ENCODE measurements at regions of chr12 and their contacts with region 1.

Region 1: DNA sequence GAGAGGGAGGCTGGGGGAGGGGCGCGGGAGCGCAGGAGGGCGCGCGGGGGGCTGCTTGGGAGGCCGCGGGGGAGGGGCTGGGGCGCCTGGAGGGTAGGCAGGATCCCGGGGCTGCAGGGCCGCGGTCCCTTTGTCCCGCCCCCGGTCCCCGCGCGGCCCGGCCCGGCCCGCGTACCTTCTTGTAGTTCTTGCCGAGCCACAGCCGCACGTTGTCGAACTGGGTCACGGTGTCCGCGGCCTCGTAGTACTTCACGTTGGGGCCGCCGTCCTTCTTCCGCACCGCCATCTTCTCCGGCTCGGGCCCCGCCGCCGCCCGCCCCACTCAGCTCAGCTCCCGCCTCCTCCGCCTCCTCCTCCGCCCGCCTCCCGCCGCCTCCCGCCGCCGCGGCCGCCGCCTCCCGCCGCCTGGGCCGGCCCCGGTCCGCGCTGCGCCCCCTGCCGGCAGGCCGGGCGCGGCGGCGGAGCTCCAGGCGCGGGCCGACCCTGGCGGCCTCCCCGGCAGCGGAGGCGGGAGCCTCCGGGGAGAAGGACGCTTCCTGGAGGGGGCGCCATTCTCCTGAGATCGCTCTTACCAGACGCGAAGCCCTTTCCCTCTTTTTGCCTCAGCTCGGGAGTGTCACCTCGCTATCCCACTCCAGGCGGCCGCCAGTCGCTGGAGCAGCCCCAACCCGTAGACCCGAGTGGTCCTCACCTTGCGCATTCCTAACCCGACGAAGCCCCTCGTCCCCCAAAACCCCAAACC is at the start of gene SMARCC2:
- H3K4me3 ChIP-seq: peak within 1 kb of the TSS; percentile 87
- H3K27ac ChIP-seq: peak within 1 kb of the TSS; percentile 86
- H3K4me1 ChIP-seq: no peaks in the 10 kb centered on the region; the same call in 1 of the 2 replicates
- CTCF ChIP-seq: peak; percentile 92

Region 2: GRCh38 chr12:56104109-56104814 is 85.1 kb before region 1 on chr12 and contains the start of gene PA2G4:
- CTCF ChIA-PET with region 1: interaction called, 10 read pairs
- POLR2A ChIA-PET with region 1: interaction called, 16 read pairs
- H3K4me3 ChIP-seq: peak within 1 kb of the TSS; percentile 82
- H3K27ac ChIP-seq: peak within 1 kb of the TSS; percentile 90
- H3K4me1 ChIP-seq: 0 out of 2 replicates have a peak, but pooled peaks cover 2% of the 10 kb centered on the region
- CTCF ChIP-seq: no peak; the same call in 1 of the 2 replicates

Region 3: DNA sequence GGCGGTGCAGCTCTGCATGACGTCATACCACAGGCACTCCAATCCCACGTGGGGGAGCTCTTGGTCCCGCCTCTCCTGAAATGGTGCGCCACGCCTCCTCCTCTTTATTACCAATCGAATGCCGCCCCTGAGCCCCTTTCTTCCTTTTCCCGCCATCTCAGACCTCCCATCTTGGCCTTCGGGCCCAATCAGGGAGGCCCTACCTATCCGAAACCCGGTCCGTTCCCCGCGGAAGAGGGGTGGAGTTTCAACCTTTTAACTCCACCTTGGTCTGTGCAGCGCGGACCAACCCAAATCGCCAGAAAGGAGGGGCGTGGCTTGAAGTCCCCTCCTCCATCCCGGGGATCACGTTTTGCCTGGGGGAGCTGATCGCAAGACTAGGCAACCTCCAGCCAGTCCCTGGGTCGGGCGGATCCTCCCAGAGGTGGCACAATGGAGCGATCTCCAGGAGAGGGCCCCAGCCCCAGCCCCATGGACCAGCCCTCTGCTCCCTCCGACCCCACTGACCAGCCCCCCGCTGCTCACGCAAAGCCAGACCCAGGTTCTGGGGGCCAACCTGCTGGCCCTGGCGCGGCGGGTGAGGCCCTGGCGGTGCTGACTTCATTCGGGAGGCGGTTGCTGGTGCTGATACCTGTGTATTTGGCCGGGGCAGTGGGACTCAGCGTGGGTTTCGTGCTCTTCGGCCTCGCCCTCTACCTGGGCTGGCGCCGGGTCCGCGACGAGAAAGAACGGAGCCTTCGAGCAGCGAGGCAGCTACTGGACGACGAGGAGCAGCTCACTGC is 61.3 kb before region 1 on chr12 and contains the start of gene ESYT1:
- CTCF ChIA-PET with region 1: interaction called, 65 read pairs
- POLR2A ChIA-PET with region 1: interaction called, 27 read pairs
- H3K4me3 ChIP-seq: peak within 1 kb of the TSS; percentile 80
- H3K27ac ChIP-seq: peak within 1 kb of the TSS; percentile 57
- H3K4me1 ChIP-seq: peaks cover 9% of the 10 kb centered on the region
- CTCF ChIP-seq: peak; percentile 67; the same call in 1 of the 2 replicates

Region 4: GRCh38 chr12:56178347-56178746 is 11.0 kb before region 1 on chr12:
- CTCF ChIA-PET with region 1: interaction called, 32 read pairs
- POLR2A ChIA-PET with region 1: interaction called, 8 read pairs
- H3K4me3 ChIP-seq: no peak overlapping the region
- H3K27ac ChIP-seq: no peak overlapping the region
- H3K4me1 ChIP-seq: no peaks in the 10 kb centered on the region
- CTCF ChIP-seq: no peak

Region 5: GRCh38 chr12:56258057-56258819 is 68.9 kb after region 1 on chr12 and contains the start of gene ANKRD52:
- CTCF ChIA-PET with region 1: interaction called, 15 read pairs
- POLR2A ChIA-PET with region 1: interaction called, 3 read pairs
- H3K4me3 ChIP-seq: peak within 1 kb of the TSS; percentile 92
- H3K27ac ChIP-seq: peak within 1 kb of the TSS; percentile 90
- H3K4me1 ChIP-seq: peaks cover 13% of the 10 kb centered on the region
- CTCF ChIP-seq: no peak

Measured in HEK293 (cell line).